BJ (cell line): ENCODE measurements at regions of chr16 and their contacts with region 1.

Region 1: GRCh38 chr16:56851671-56852400 is 13.2 kb upstream of the SLC12A3 start:
- DNase-seq: no peak
- H3K4me3 ChIP-seq: no peak overlapping the region
- H3K27me3 ChIP-seq: no peaks in the 10 kb centered on the region
- CTCF ChIP-seq: peak; percentile 66

Region 2: DNA sequence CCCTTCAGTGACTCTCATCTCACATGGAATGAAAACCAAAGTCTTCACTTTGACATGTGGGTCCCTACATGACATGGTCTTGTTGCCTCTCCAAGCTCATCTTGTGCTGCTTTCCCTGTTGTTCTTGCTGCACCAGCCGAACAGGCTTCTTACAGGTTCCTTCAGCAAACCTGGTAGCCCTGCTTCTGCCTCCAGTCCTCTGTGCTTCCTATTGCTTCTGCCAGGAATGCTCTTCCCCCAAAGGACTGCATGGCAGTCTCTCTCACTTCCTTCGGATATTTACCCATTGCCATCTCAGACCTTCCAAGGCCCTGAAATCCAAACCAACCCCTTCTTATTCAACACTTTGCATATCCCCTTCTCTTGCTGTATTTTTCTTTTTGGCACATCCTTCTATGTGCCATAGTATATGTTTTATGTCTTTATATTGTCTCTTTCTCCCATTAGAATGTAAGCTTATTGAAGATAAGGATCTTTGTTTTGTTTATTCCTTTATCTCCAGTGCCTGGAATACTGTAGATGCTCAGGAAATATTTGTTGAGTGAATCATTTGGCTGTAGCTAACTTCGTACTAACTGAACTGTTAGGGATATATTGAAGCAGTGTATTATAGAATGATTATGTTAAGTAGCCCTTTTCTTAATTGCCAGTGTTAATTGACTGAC is 44.7 kb before region 1 on chr16:
- CTCF ChIA-PET with region 1: interaction called, 10 read pairs
- POLR2A ChIA-PET with region 1: no interaction called
- DNase-seq: peak; percentile 26
- H3K4me3 ChIP-seq: no peak overlapping the region
- H3K27me3 ChIP-seq: no peaks in the 10 kb centered on the region
- CTCF ChIP-seq: no peak

Region 3: DNA sequence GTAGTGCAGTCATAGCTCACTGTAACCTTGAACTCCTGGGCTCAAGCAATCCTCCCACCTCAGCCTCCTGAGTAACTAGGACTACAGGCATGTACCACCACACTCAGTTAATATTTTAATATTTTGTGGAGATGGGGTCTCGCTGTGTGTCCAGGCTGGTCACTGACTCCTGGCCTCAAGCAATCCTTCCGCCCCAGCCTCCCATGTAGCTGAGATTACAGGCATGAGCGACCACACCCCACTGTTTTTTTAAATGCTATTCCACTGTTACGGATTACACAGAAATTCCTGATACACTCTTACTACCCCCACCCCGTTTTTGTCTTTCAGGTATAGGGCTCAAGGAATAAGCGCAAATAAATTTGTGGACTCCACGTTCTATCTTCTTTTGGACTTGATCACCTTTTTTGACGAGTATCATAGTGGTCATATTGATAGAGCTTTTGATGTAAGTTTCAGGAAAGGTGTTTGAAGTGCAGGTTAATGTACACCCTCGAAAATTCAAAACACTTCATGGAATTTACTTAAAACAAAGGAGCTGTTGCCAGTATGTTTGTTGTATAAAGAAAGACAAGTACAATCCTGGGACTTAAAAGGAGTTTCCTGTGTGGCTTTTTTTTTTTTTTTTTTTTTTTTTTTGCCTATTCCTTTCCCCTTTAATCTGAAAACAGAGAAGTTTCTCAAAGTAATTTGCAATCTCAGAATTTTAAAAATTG is 13.1 kb before region 1 on chr16:
- CTCF ChIA-PET with region 1: interaction called, 11 read pairs
- POLR2A ChIA-PET with region 1: no interaction called
- DNase-seq: no peak
- H3K4me3 ChIP-seq: no peak overlapping the region
- H3K27me3 ChIP-seq: no peaks in the 10 kb centered on the region
- CTCF ChIP-seq: no peak